ENCODE measurements at regions of chr10 and their contacts with region 1.

Region 1: GRCh38 chr10:118610577-118610976 is 15.1 kb upstream of the PRLHR start:
- DNase-seq: peak; percentile 55
- H3K4me3 ChIP-seq: no peak overlapping the region
- H3K27ac ChIP-seq: peak overlapping the region in 1 of 2 experiments; percentile 76; a peak in 2 of 4 replicates
- H3K4me1 ChIP-seq: peaks cover 0 to 34% of the 10 kb centered on the region in 2 experiments; a peak in 2 of 4 replicates
- H3K27me3 ChIP-seq: no peaks in the 10 kb centered on the region; the same call in 1 of the 2 replicates
- CTCF ChIP-seq: no peak
- EP300 ChIP-seq: peak in 1 of 2 experiments; percentile 58; a peak in 1 of 4 replicates
- RAD21 ChIP-seq: no peak

Region 2: GRCh38 chr10:117980216-117980615 is 630.4 kb before region 1 on chr10:
- CTCF ChIA-PET with region 1: no interaction called
- POLR2A ChIA-PET with region 1: no interaction called
- DNase-seq: no peak
- H3K4me3 ChIP-seq: no peak overlapping the region
- H3K27ac ChIP-seq: peak overlapping the region in 1 of 2 experiments; percentile 26; a peak in 1 of 4 replicates
- H3K4me1 ChIP-seq: no peaks in the 10 kb centered on the region
- H3K27me3 ChIP-seq: no peaks in the 10 kb centered on the region
- CTCF ChIP-seq: no peak
- EP300 ChIP-seq: no peak
- RAD21 ChIP-seq: no peak

Region 3: GRCh38 chr10:118594392-118595063 is 16.0 kb before region 1 on chr10:
- CTCF ChIA-PET with region 1: interaction called, 51 read pairs
- POLR2A ChIA-PET with region 1: interaction called, 3 read pairs
- DNase-seq: peak; percentile 75
- H3K4me3 ChIP-seq: no peak overlapping the region; a peak in 1 of 4 replicates
- H3K27ac ChIP-seq: no peak overlapping the region
- H3K4me1 ChIP-seq: peaks cover 0 to 19% of the 10 kb centered on the region in 2 experiments; a peak in 2 of 4 replicates
- H3K27me3 ChIP-seq: peaks cover 10% of the 10 kb centered on the region; the same call in 1 of the 2 replicates
- CTCF ChIP-seq: peak; percentile 23; the same call in 1 of the 2 replicates
- EP300 ChIP-seq: no peak
- RAD21 ChIP-seq: no peak; the same call in 1 of the 2 replicates

Region 4: GRCh38 chr10:118626953-118627352 is 16.4 kb after region 1 on chr10:
- CTCF ChIA-PET with region 1: interaction called, 17 read pairs
- POLR2A ChIA-PET with region 1: no interaction called
- DNase-seq: no peak
- H3K4me3 ChIP-seq: no peak overlapping the region; a peak in 1 of 4 replicates
- H3K27ac ChIP-seq: no peak overlapping the region
- H3K4me1 ChIP-seq: peaks cover 4 to 18% of the 10 kb centered on the region in 2 experiments; a peak in 2 of 4 replicates
- H3K27me3 ChIP-seq: no peaks in the 10 kb centered on the region; the same call in 1 of the 2 replicates
- CTCF ChIP-seq: peak; percentile 31; the same call in 1 of the 2 replicates
- EP300 ChIP-seq: no peak
- RAD21 ChIP-seq: no peak